Dendritic cell treated with granulocyte-macrophage colony-stimulating factor and Interleukin-4, amounts not matched to agents 40 ng/mL and 50 ng/mL, for 4 days (primary cell): ENCODE measurements at regions of chr3 and their contacts with region 1.

Region 1: GRCh38 chr3:88113311-88114162 is 36.2 kb upstream of the C3orf38 start:
- H3K4me3 Mint-ChIP-seq: no peak overlapping the region
- H3K27ac Mint-ChIP-seq: no peak overlapping the region
- H3K4me1 Mint-ChIP-seq: peaks cover 5% of the 10 kb centered on the region
- H3K27me3 Mint-ChIP-seq: no peaks in the 10 kb centered on the region

Region 2: GRCh38 chr3:87350364-87351199 is 763.0 kb before region 1 on chr3:
- intact Hi-C with region 1: loop called (anchors 2 kb)
- H3K4me3 Mint-ChIP-seq: no peak overlapping the region
- H3K27ac Mint-ChIP-seq: no peak overlapping the region
- H3K4me1 Mint-ChIP-seq: no peaks in the 10 kb centered on the region
- H3K27me3 Mint-ChIP-seq: no peaks in the 10 kb centered on the region

Region 3: GRCh38 chr3:88046766-88047165 is 66.8 kb before region 1 on chr3:
- intact Hi-C with region 1: no loop called
- H3K4me3 Mint-ChIP-seq: no peak overlapping the region
- H3K27ac Mint-ChIP-seq: no peak overlapping the region
- H3K4me1 Mint-ChIP-seq: peaks cover 5% of the 10 kb centered on the region
- H3K27me3 Mint-ChIP-seq: no peaks in the 10 kb centered on the region

Region 4: DNA sequence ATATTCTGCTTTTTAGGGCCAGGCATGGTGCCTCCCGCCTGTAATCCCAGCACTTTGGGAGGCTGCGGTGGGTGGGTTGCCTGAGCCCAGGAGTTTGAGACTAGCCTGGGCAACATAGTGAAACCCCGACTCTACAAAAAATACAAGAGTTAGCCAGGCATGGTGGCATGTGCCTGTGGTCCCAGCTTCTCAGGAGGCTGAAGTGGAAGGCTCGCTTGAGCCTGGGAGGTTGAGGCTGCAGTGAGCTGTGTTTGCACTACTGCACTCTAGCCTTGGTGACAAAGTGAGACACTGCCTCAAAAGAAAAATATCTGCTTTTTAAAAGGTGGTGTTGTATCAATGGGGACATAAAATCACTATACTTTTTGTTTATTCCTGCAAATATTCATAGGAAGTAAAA is 149.0 kb after region 1 on chr3:
- intact Hi-C with region 1: no loop called
- H3K4me3 Mint-ChIP-seq: no peak overlapping the region
- H3K27ac Mint-ChIP-seq: no peak overlapping the region
- H3K4me1 Mint-ChIP-seq: no peaks in the 10 kb centered on the region
- H3K27me3 Mint-ChIP-seq: no peaks in the 10 kb centered on the region